Posterior vena cava (tissue), 2 donors: ENCODE measurements at regions of chr17 and their contacts with region 1.

Region 1: DNA sequence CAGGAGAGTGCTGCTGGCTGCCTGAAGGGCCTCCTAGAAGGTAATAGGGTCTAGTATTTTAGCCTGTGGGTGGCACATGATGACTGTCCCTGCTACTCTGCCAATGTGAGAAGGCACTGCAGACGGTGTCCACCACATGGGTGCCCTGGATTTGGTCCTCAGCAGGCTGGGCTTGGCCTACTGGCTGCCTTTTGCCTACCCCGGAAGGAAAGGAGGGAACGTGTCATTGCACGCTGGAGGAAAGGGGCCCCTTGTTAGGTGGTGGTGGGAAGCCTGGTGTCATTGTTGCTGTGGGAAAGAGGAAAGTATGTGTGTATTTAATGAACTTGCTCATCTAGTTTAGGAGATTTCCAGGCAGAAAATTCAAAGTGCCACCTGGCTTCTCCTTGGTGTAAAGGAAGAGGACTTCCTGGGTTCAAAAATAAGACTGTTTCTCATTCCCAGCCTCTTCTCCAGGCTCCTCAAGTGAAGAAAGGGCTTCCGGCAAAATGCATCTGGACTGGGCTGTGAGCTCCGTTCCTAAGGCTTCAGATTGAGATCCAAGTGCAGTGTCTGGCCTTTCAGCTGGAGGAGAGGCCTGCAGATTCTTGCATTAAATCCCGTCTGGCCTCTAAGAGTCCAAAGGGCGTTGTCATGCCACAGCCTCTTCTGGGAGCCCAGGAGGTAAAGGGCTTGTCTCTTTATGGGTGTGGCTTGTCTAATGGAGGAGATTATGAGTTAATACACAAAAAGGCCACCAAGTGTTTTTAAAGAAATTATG is 55.1 kb downstream of the RPTOR start:
- DNase-seq: no peak

Region 2: DNA sequence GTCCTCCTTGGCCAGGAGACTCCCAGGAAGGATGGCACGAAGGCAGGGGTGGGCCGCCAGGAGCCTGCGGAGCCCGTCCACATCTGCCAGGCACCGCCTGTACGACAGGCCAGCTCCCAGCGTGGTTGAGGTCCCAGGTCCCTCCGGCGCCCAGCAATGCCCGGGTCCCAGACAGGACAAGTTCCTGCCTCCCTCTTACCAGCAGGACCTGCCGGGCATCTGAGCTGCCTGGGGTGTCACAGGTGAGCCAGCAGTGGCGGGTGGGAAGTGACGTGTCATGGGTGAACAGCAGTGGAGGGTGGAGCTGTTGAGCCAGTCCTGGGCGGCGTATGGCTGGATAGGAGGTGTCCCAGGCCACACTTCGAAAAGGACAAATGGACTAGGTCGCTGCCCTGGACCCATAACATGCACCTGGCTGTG is 779.8 kb after region 1 on chr17:
- intact Hi-C with region 1: loop called in 1 of 2 experiments (anchors 5 kb)
- DNase-seq: no peak